T-cell (primary cell): ENCODE measurements at regions of chr17 and their contacts with region 1.

Region 1: GRCh38 chr17:58200017-58200633 is 7.6 kb downstream of the EPX start:
- DNase-seq: peak in 34 of 35 experiments; percentile 16 to 66 (median 42)
- ATAC-seq: peak; percentile 60 to 82 (median 75)
- H3K4me3 ChIP-seq: no peak overlapping the region
- H3K4me3 Mint-ChIP-seq: no peak overlapping the region
- H3K27ac ChIP-seq: no peak overlapping the region
- H3K27ac Mint-ChIP-seq: no peak overlapping the region
- H3K4me1 ChIP-seq: no peaks in the 10 kb centered on the region
- H3K4me1 Mint-ChIP-seq: peaks cover 0 to 3% (median 2%) of the 10 kb centered on the region in 3 donors
- H3K27me3 ChIP-seq: peaks cover 0 to 35% of the 10 kb centered on the region in 2 experiments
- H3K27me3 Mint-ChIP-seq: peaks cover 17 to 37% of the 10 kb centered on the region in 2 donors

Region 2: GRCh38 chr17:57955183-57955931 is 244.8 kb before region 1 on chr17 and contains the start of gene CUEDC1:
- CTCF ChIA-PET with region 1: no interaction called
- POLR2A ChIA-PET with region 1: interaction called in 1 of 2 experiments, 10 read pairs
- DNase-seq: peak; percentile 22 to 75 (median 50)
- ATAC-seq: peak; percentile 84 to 86 (median 85)
- H3K4me3 ChIP-seq: peak within 1 kb of the TSS; percentile 58 to 86
- H3K4me3 Mint-ChIP-seq: peak within 1 kb of the TSS; percentile 67 to 79 (median 76)
- H3K27ac ChIP-seq: no peak within 1 kb of the TSS
- H3K27ac Mint-ChIP-seq: no peak within 1 kb of the TSS
- H3K4me1 ChIP-seq: peaks cover 7 to 20% of the 10 kb centered on the region in 2 experiments
- H3K4me1 Mint-ChIP-seq: peaks cover 24 to 31% (median 27%) of the 10 kb centered on the region in 3 donors
- H3K27me3 ChIP-seq: peaks cover 2 to 32% of the 10 kb centered on the region in 2 experiments
- H3K27me3 Mint-ChIP-seq: peaks cover 10 to 25% of the 10 kb centered on the region in 2 donors
- total RNA-seq, gene CUEDC1: 0.33 to 1.4 (median 0.74) TPM in 4 of 5 donors, not detected in the other